HEK293 (cell line): ENCODE measurements at regions of chr14 and their contacts with region 1.

Region 1: GRCh38 chr14:106372870-106373652 is 846.7 kb downstream of the TMEM121 start:
- H3K4me3 ChIP-seq: no peak overlapping the region
- H3K27ac ChIP-seq: no peak overlapping the region
- H3K4me1 ChIP-seq: no peaks in the 10 kb centered on the region
- CTCF ChIP-seq: peak; percentile 83

Region 2: DNA sequence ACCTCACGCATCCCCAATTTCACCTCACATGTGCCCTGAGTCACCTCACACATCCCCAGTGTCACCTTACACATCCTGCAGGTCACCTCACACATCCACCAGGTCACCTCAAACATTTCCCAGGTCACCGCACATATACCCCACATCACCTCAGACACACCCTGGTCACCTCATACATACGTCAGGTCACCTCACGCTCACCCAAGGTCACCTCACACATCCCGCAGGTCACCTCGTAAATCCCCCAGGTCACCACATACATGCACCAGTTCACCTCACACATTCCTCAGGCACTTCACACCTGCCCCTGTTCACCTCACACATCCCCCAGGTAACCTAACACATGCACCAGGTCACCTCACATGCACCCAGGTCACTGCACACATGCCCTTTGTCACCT is 17.3 kb after region 1 on chr14:
- CTCF ChIA-PET with region 1: interaction called, 13 read pairs
- POLR2A ChIA-PET with region 1: no interaction called
- H3K4me3 ChIP-seq: no peak overlapping the region
- H3K27ac ChIP-seq: no peak overlapping the region
- H3K4me1 ChIP-seq: no peaks in the 10 kb centered on the region
- CTCF ChIP-seq: no peak

Region 3: GRCh38 chr14:106518054-106518943 is 145.2 kb after region 1 on chr14:
- CTCF ChIA-PET with region 1: no interaction called
- POLR2A ChIA-PET with region 1: no interaction called
- H3K4me3 ChIP-seq: no peak overlapping the region
- H3K27ac ChIP-seq: no peak overlapping the region
- H3K4me1 ChIP-seq: no peaks in the 10 kb centered on the region
- CTCF ChIP-seq: no peak